Ovary (tissue), 10 donors: ENCODE measurements at regions of chr9 and their contacts with region 1.

Region 1: GRCh38 chr9:135440620-135441019 is 39.0 kb upstream of the PPP1R26 start:
- DNase-seq: peak in 1 of 5 donors; percentile 15
- H3K4me3 ChIP-seq: no peak overlapping the region
- H3K27ac ChIP-seq: peak overlapping the region in 1 of 2 donors; percentile 69
- H3K4me1 ChIP-seq: peaks cover 6% of the 10 kb centered on the region
- H3K27me3 ChIP-seq: no peaks in the 10 kb centered on the region
- CTCF ChIP-seq: no peak
- EP300 ChIP-seq: no peak
- POLR2A ChIP-seq: no peak

Region 2: GRCh38 chr9:135478858-135479468 is 38.3 kb after region 1 on chr9:
- intact Hi-C with region 1: loop called in 1 of 4 experiments (anchors 5 kb)
- DNase-seq: peak; percentile 40 to 63 (median 51)
- H3K4me3 ChIP-seq: peak overlapping the region; percentile 48
- H3K27ac ChIP-seq: peak overlapping the region; percentile 62 to 71
- H3K4me1 ChIP-seq: peaks cover 4% of the 10 kb centered on the region
- H3K27me3 ChIP-seq: no peaks in the 10 kb centered on the region
- CTCF ChIP-seq: no peak
- EP300 ChIP-seq: no peak
- POLR2A ChIP-seq: no peak

Region 3: GRCh38 chr9:136211441-136212344 is 771.1 kb after region 1 on chr9:
- intact Hi-C with region 1: no loop called
- DNase-seq: no peak
- H3K4me3 ChIP-seq: no peak overlapping the region
- H3K27ac ChIP-seq: no peak overlapping the region
- H3K4me1 ChIP-seq: no peaks in the 10 kb centered on the region
- H3K27me3 ChIP-seq: no peaks in the 10 kb centered on the region
- CTCF ChIP-seq: no peak
- EP300 ChIP-seq: no peak
- POLR2A ChIP-seq: no peak